ENCODE measurements at regions of chr10 and their contacts with region 1.

Region 1: GRCh38 chr10:24929056-24929544 is 23.3 kb downstream of the PRTFDC1 start:
- DNase-seq: peak; percentile 79
- ATAC-seq: peak; percentile 88
- H3K4me3 ChIP-seq: no peak overlapping the region
- H3K27ac ChIP-seq: no peak overlapping the region
- H3K4me1 ChIP-seq: peaks cover 6% of the 10 kb centered on the region
- H3K27me3 ChIP-seq: no peaks in the 10 kb centered on the region
- CTCF ChIP-seq: no peak
- EP300 ChIP-seq: peak; percentile 55 to 66; a peak in 1 of 4 replicates
- POLR2A ChIP-seq: no peak
- RAD21 ChIP-seq: no peak

Region 2: DNA sequence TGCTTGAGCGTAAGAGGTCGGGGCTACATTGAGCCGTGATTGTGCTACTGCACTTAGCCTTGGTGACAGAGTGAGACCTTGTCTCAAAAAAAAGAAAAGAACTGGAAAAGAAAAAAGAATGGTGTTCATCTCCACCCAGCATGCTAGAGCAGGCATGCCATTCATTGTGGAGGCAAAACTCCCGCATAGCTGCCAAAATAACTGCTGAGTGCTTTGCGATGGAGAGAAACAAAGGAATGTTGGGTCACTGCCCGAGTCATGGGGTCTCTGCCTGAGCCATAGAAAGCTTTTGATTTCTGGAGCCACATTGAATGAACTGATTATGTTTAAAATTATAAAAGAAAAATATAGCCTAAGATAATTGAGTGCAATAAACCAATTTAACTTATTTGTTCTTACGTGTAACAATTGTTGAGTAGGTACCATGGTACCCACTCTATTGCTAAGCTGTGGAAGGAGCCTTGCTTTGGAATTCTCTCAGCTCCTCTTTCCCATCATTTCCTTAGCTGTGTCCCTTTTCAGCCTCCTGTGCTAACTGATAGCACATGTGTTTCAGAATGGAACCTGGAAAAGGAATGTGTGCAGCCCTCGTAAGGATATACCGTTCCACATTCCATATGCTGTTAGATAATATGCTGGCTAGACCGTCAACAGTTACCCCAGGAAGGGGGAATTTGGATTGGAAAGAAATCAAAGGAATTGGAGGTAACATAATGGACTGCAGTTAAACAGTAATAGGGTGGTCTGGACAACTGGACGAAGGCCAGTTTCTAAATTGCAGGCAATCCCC is 621.2 kb before region 1 on chr10:
- CTCF ChIA-PET with region 1: no interaction called
- POLR2A ChIA-PET with region 1: no interaction called
- RAD21 ChIA-PET with region 1: no interaction called
- SMC1A ChIA-PET with region 1: no interaction called
- in situ Hi-C with region 1: no loop called
- intact Hi-C with region 1: no loop called
- DNase-seq: no peak
- ATAC-seq: no peak
- H3K4me3 ChIP-seq: no peak overlapping the region
- H3K27ac ChIP-seq: no peak overlapping the region
- H3K4me1 ChIP-seq: no peaks in the 10 kb centered on the region
- H3K27me3 ChIP-seq: no peaks in the 10 kb centered on the region
- CTCF ChIP-seq: no peak
- EP300 ChIP-seq: no peak
- POLR2A ChIP-seq: no peak
- RAD21 ChIP-seq: no peak

Region 3: DNA sequence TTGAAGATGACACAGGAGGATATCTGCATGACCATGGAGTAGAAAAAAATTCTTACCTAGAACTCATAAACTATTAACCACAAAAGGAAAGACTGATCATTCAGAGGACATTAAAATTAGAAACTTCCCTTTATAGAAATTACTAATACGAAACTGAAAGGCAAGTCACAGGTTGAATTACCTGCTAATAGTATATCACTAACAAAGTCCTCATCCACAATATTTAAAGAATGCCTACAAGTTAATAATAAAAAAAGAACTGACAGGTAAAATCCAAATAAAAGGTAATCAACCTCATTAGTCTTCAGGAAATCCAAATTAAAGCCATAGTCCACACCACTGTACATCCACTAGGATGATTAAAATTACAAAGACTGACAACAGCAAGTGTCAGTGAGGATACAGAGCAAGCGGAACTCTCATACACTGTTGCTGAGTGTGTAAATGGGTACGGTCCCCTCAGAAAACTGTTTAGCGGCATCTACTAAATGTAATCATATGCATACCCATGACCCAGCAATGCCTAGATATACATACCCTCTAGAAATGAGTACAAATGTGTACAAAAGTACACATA is 276.6 kb before region 1 on chr10:
- CTCF ChIA-PET with region 1: no interaction called
- POLR2A ChIA-PET with region 1: interaction called, 3 read pairs
- RAD21 ChIA-PET with region 1: interaction called, 11 read pairs
- SMC1A ChIA-PET with region 1: interaction called, 23 read pairs
- in situ Hi-C with region 1: no loop called
- intact Hi-C with region 1: loop called (anchors 5 kb)
- DNase-seq: peak; percentile 62
- ATAC-seq: peak; percentile 93
- H3K4me3 ChIP-seq: peak overlapping the region; percentile 46
- H3K27ac ChIP-seq: peak overlapping the region; percentile 76
- H3K4me1 ChIP-seq: peaks cover 15% of the 10 kb centered on the region
- H3K27me3 ChIP-seq: no peaks in the 10 kb centered on the region
- CTCF ChIP-seq: no peak
- EP300 ChIP-seq: peak; percentile 42 to 82; a peak in 3 of 4 replicates
- POLR2A ChIP-seq: no peak
- RAD21 ChIP-seq: no peak

Region 4: DNA sequence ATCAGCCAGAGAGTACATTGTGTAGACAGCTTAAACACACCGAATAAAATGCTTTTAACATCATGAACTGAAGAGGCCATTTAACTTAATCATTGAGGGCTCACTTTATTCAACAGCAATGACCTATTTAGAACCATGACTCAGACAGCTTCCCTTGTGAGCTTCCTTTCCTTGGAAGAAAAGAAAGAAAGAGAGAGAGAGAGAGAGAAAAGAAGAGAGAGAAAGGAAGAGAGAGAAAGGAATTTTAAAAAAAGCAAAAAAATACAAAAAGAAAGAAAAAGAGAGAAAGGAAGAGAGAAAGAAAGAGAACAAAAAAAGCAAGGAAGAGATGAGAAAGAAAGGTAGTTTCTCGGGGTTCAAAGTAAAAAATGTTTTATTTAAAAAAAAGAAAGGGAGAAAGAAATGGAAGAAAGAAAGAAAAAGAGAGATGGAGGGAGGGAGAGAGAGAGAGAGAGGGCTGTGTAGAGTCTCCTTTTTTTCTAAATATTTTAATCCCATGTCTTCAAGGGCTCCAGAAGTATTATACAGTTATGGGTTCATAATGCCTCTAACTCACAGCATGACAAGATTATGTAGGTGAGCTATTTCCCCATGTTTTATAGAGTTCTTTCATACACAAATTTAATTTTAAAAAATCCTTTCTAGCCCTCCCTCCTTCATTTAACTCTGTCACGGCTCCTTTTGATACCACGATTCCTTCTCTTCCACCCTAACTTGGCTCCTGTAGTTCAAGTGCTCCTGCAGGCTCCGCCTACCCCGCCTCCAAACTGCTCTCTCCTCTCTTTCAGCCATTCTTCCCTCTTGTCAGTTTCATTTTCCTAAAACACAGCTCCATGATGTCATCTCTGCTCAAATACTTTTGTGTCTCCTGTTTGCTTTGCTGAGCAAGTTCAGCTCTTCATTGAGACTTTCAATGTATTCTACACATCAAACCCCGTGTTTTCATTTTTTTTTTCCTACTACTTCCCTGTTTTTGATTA is 62.2 kb before region 1 on chr10:
- CTCF ChIA-PET with region 1: interaction called, 3 read pairs
- POLR2A ChIA-PET with region 1: interaction called, 3 read pairs
- RAD21 ChIA-PET with region 1: interaction called, 4 read pairs
- SMC1A ChIA-PET with region 1: interaction called, 11 read pairs
- in situ Hi-C with region 1: no loop called
- intact Hi-C with region 1: no loop called
- DNase-seq: no peak
- ATAC-seq: peak; percentile 26; the same call in 2 of the 3 replicates
- H3K4me3 ChIP-seq: no peak overlapping the region
- H3K27ac ChIP-seq: no peak overlapping the region
- H3K4me1 ChIP-seq: no peaks in the 10 kb centered on the region
- H3K27me3 ChIP-seq: no peaks in the 10 kb centered on the region
- CTCF ChIP-seq: no peak
- EP300 ChIP-seq: no peak
- POLR2A ChIP-seq: no peak
- RAD21 ChIP-seq: no peak

Region 5: DNA sequence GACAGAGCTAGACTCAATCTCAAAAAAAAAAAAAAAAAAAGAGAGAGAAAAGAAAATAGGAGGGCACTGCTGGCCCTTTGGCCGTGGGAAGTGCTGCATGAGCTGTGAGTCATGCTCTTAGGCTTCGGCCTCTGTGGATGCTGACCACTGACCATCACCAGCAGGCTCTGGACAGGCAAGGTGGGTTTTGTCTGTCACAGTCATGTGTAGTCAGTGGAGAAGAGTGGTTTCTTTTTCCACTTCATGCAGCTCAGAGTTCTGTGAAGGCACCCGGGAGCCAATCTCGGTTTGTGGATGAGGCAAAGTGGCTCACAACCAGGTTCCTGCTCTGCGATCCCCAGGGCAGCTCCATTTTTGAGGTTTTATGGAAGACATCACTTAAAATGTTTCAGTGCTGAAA is 34.8 kb before region 1 on chr10:
- CTCF ChIA-PET with region 1: interaction called, 4 read pairs
- POLR2A ChIA-PET with region 1: interaction called, 44 read pairs
- RAD21 ChIA-PET with region 1: interaction called, 193 read pairs
- SMC1A ChIA-PET with region 1: interaction called, 338 read pairs
- in situ Hi-C with region 1: no loop called
- intact Hi-C with region 1: loop called (anchors 5 kb)
- DNase-seq: no peak
- ATAC-seq: peak; percentile 40
- H3K4me3 ChIP-seq: no peak overlapping the region
- H3K27ac ChIP-seq: no peak overlapping the region
- H3K4me1 ChIP-seq: peaks cover 3% of the 10 kb centered on the region; the same call in 1 of the 2 replicates
- H3K27me3 ChIP-seq: no peaks in the 10 kb centered on the region
- CTCF ChIP-seq: no peak
- EP300 ChIP-seq: no peak
- POLR2A ChIP-seq: no peak
- RAD21 ChIP-seq: no peak

Region 6: GRCh38 chr10:24915304-24915703 is 13.8 kb before region 1 on chr10:
- CTCF ChIA-PET with region 1: interaction called, 12 read pairs
- POLR2A ChIA-PET with region 1: interaction called, 22 read pairs
- RAD21 ChIA-PET with region 1: interaction called, 52 read pairs
- SMC1A ChIA-PET with region 1: interaction called, 338 read pairs
- in situ Hi-C with region 1: no loop called
- intact Hi-C with region 1: no loop called
- DNase-seq: no peak
- ATAC-seq: no peak
- H3K4me3 ChIP-seq: no peak overlapping the region
- H3K27ac ChIP-seq: no peak overlapping the region
- H3K4me1 ChIP-seq: no peaks in the 10 kb centered on the region
- H3K27me3 ChIP-seq: no peaks in the 10 kb centered on the region
- CTCF ChIP-seq: no peak
- EP300 ChIP-seq: no peak
- POLR2A ChIP-seq: no peak
- RAD21 ChIP-seq: no peak

Region 7: GRCh38 chr10:24962995-24963394 is 33.9 kb after region 1 on chr10:
- CTCF ChIA-PET with region 1: no interaction called
- POLR2A ChIA-PET with region 1: interaction called, 4 read pairs
- RAD21 ChIA-PET with region 1: interaction called, 13 read pairs
- SMC1A ChIA-PET with region 1: interaction called, 14 read pairs
- in situ Hi-C with region 1: no loop called
- intact Hi-C with region 1: no loop called
- DNase-seq: no peak
- ATAC-seq: no peak; the same call in 2 of the 3 replicates
- H3K4me3 ChIP-seq: no peak overlapping the region
- H3K27ac ChIP-seq: no peak overlapping the region
- H3K4me1 ChIP-seq: no peaks in the 10 kb centered on the region
- H3K27me3 ChIP-seq: no peaks in the 10 kb centered on the region; a peak in 1 of 4 replicates
- CTCF ChIP-seq: no peak
- EP300 ChIP-seq: no peak
- POLR2A ChIP-seq: no peak
- RAD21 ChIP-seq: no peak

Region 8: DNA sequence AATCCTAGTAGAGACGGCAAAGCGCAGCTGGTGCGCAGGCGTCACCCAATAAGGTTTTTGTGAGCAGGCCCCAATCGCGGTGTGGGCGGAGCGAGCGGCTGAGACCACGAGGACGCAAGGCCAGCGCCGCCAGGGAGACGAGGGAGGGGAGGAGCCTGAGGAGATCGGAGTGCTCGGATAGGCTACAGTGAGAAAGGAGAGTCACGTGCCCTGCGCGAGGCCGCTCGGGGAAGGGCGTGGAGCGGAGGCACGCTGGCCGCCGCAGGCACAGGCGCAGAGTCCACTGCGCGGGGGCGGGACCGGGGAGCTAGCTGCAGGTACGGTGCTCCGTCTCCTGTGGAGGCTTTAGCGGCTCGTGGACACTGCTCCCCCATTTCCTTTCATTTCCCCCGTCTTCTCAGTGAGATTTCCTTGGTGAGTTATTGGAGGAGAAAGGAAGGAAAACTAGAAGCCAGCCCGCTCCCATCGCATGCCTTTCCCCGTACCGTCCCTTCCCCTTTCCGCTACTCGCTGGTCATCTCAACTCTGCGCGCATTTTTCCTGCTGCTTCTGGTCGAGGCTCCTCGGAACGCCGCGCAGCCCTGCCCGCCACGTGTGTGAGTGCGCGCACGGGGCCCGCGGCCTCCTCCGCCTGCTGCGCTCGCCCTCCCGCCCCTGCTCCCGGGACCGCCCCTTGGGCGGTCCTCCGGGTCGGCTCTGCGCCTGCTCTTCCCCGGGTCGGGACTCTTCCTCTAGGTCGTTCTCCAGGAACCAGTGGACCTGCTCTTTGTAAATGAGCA is 87.5 kb after region 1 on chr10 and contains the start of gene THNSL1:
- CTCF ChIA-PET with region 1: interaction called, 3 read pairs
- POLR2A ChIA-PET with region 1: interaction called, 4 read pairs
- RAD21 ChIA-PET with region 1: interaction called, 12 read pairs
- SMC1A ChIA-PET with region 1: interaction called, 5 read pairs
- in situ Hi-C with region 1: no loop called
- intact Hi-C with region 1: no loop called
- DNase-seq: peak; percentile 90
- ATAC-seq: peak; percentile 98
- H3K4me3 ChIP-seq: peak within 1 kb of the TSS; percentile 81
- H3K27ac ChIP-seq: peak within 1 kb of the TSS; percentile 80
- H3K4me1 ChIP-seq: peaks cover 4% of the 10 kb centered on the region
- H3K27me3 ChIP-seq: no peaks in the 10 kb centered on the region
- CTCF ChIP-seq: no peak
- EP300 ChIP-seq: no peak
- POLR2A ChIP-seq: peak; percentile 94
- RAD21 ChIP-seq: no peak
- polyA plus RNA-seq, gene THNSL1: 5.8 to 6.1 TPM

Measured in GM12878 (cell line).